Caco-2 (cell line): ENCODE measurements at regions of chr19 and their contacts with region 1.

Region 1: GRCh38 chr19:6516659-6517291 is 14.1 kb upstream of the TNFSF9 start:
- DNase-seq: peak; percentile 87 to 93
- H3K4me3 ChIP-seq: peak overlapping the region; percentile 65
- H3K4me3 Mint-ChIP-seq: peak overlapping the region; percentile 90
- H3K27ac Mint-ChIP-seq: peak overlapping the region; percentile 42
- H3K4me1 ChIP-seq: peaks cover 28% of the 10 kb centered on the region
- H3K4me1 Mint-ChIP-seq: peaks cover 21% of the 10 kb centered on the region
- H3K27me3 ChIP-seq: no peaks in the 10 kb centered on the region
- H3K27me3 Mint-ChIP-seq: no peaks in the 10 kb centered on the region
- CTCF ChIP-seq: peak; percentile 92 to 94

Region 2: DNA sequence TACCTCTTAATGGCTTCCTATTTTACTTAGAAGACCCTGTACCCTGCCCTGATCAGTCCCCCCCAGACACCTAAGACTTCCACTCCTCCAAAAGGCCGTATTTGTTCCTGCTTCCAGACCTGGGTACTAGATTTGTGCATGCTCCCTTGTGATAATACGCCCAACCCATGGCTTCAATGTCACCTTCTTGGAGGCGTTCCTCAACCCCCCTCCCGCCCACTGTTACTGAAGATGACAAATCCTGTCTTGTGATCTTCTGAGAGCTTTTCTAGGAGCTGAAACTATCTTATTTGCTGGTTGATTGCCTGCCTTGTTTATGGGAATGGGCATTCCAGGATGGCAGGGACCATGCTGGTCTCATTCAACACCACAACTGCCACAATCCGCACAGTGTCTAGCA is 66.6 kb before region 1 on chr19:
- CTCF ChIA-PET with region 1: no interaction called
- POLR2A ChIA-PET with region 1: no interaction called
- intact Hi-C with region 1: no loop called
- DNase-seq: no peak
- H3K4me3 ChIP-seq: no peak overlapping the region
- H3K4me3 Mint-ChIP-seq: no peak overlapping the region
- H3K27ac Mint-ChIP-seq: no peak overlapping the region
- H3K4me1 ChIP-seq: no peaks in the 10 kb centered on the region
- H3K4me1 Mint-ChIP-seq: no peaks in the 10 kb centered on the region
- H3K27me3 ChIP-seq: no peaks in the 10 kb centered on the region
- H3K27me3 Mint-ChIP-seq: no peaks in the 10 kb centered on the region
- CTCF ChIP-seq: no peak

Region 3: GRCh38 chr19:6476155-6476895 is 40.5 kb before region 1 on chr19:
- CTCF ChIA-PET with region 1: interaction called, 15 read pairs
- POLR2A ChIA-PET with region 1: no interaction called
- intact Hi-C with region 1: no loop called
- DNase-seq: peak; percentile 98 to 99
- H3K4me3 ChIP-seq: peak overlapping the region; percentile 47
- H3K4me3 Mint-ChIP-seq: peak overlapping the region; percentile 84
- H3K27ac Mint-ChIP-seq: peak overlapping the region; percentile 91
- H3K4me1 ChIP-seq: peaks cover 19% of the 10 kb centered on the region
- H3K4me1 Mint-ChIP-seq: peaks cover 9% of the 10 kb centered on the region
- H3K27me3 ChIP-seq: no peaks in the 10 kb centered on the region
- H3K27me3 Mint-ChIP-seq: no peaks in the 10 kb centered on the region
- CTCF ChIP-seq: no peak

Region 4: DNA sequence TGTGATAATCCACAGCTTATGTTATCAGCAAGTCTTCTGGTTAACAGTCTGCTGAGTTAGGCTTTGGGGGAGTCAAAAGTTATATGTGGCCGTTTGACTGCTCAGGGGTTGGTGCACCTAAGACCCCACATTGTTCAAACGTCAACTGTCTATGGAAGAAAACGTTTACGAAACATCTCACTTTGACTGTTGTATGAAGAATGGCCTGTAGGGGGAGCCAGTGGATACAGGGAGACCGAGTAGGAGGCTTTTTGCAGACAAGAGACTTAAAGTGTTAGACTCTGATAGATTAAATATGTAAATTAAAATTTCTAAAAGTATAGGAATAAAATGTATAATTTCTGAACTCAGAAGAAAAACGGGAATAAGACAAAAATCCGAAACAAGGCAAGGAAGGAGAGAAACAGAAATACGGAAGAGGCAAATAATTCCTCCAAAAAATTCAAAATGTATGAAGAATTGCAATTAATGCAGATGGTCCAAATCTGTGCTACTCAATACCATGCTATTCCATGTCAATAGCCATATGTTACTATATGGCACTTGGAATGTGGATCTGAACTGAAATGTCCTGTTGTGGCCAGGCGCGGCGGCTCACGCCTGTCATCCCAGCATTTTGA is 115.3 kb after region 1 on chr19:
- CTCF ChIA-PET with region 1: interaction called, 7 read pairs
- POLR2A ChIA-PET with region 1: no interaction called
- intact Hi-C with region 1: loop called (anchors 1 kb)
- DNase-seq: peak; percentile 68 to 80
- H3K4me3 ChIP-seq: no peak overlapping the region
- H3K4me3 Mint-ChIP-seq: no peak overlapping the region
- H3K27ac Mint-ChIP-seq: no peak overlapping the region
- H3K4me1 ChIP-seq: no peaks in the 10 kb centered on the region
- H3K4me1 Mint-ChIP-seq: peaks cover 6% of the 10 kb centered on the region
- H3K27me3 ChIP-seq: no peaks in the 10 kb centered on the region
- H3K27me3 Mint-ChIP-seq: no peaks in the 10 kb centered on the region
- CTCF ChIP-seq: peak; percentile 76 to 84

Region 5: GRCh38 chr19:6767357-6768235 is 250.8 kb after region 1 on chr19 and contains the start of gene SH2D3A:
- CTCF ChIA-PET with region 1: no interaction called
- POLR2A ChIA-PET with region 1: no interaction called
- intact Hi-C with region 1: loop called (anchors 2 kb)
- DNase-seq: peak; percentile 95 to 96
- H3K4me3 ChIP-seq: peak within 1 kb of the TSS; percentile 80
- H3K4me3 Mint-ChIP-seq: peak within 1 kb of the TSS; percentile 80
- H3K27ac Mint-ChIP-seq: peak within 1 kb of the TSS; percentile 94
- H3K4me1 ChIP-seq: peaks cover 13% of the 10 kb centered on the region
- H3K4me1 Mint-ChIP-seq: peaks cover 10% of the 10 kb centered on the region
- H3K27me3 ChIP-seq: no peaks in the 10 kb centered on the region
- H3K27me3 Mint-ChIP-seq: no peaks in the 10 kb centered on the region
- CTCF ChIP-seq: no peak
- total RNA-seq, gene SH2D3A: 20.5 and 24.5 TPM in 2 replicates

Region 6: DNA sequence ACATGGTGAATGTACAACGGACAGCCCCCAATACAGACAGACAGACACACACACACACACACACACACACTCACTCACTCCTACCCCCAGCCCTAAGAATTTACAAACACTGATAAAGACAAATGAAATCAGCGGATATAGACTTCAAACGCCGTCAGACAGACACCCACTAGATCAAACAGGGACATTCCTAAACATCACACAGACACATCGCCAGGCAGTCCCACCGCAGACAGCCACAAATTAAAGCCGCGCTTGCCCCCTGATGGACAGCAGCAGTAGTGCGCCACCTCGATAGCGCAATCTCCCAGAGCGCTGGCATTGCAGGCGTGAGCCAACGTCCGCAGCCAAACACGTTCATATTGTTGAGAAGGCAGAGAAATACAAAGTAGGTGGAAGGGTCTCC is 345.9 kb after region 1 on chr19:
- CTCF ChIA-PET with region 1: interaction called, 10 read pairs
- POLR2A ChIA-PET with region 1: no interaction called
- intact Hi-C with region 1: loop called (anchors 1 kb)
- DNase-seq: peak; percentile 85 to 87
- H3K4me3 ChIP-seq: peak overlapping the region; percentile 24
- H3K4me3 Mint-ChIP-seq: peak overlapping the region; percentile 65
- H3K27ac Mint-ChIP-seq: no peak overlapping the region
- H3K4me1 ChIP-seq: no peaks in the 10 kb centered on the region
- H3K4me1 Mint-ChIP-seq: peaks cover 6% of the 10 kb centered on the region
- H3K27me3 ChIP-seq: no peaks in the 10 kb centered on the region
- H3K27me3 Mint-ChIP-seq: peaks cover 3% of the 10 kb centered on the region
- CTCF ChIP-seq: peak; percentile 82 to 88